ENCODE measurements at regions of chr9 and their contacts with region 1.

Region 1: GRCh38 chr9:35956651-35957050 is 1.3 kb downstream of the OR2S2 start:
- DNase-seq: no peak
- H3K4me3 ChIP-seq: no peak overlapping the region
- H3K27ac ChIP-seq: no peak overlapping the region
- H3K4me1 ChIP-seq: no peaks in the 10 kb centered on the region
- H3K27me3 ChIP-seq: no peaks in the 10 kb centered on the region
- CTCF ChIP-seq: no peak

Region 2: DNA sequence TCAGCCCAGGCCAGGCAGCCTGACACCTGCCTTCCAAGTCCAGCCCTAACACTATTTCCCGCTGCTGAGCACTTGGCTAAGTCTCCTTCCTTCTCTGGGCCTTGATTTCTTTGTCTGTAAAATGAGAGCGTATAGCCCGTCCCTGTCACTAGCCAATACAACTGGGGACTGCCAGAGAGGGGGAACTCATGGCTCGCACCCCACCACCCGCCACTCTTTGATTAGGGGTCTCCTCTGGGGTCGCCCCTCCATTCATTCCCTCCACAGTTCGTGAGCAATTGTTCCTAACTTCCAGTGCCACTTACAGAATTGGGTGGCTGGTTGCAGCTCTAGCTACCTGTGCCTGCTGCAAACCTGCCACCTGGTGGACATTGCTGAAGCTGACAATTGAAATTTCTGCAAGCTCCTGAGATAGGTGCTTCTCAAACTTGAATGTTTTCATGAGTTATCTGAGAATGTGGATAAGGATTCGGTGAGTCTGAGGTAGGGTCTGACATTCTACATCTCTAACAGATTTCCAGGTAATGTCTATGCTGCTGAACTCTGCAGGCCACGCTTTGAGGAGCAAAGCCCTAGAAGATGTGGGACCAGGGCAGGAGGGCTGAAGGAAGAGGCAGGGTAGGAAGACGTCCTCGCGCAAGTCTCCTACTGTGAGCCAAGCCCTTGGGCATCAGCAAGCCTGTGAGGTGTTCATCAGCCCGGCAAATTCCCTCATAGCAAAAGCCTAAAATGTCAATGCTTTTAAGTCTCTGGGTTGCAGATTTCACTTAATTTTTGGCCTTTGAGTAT is 66.8 kb after region 1 on chr9:
- intact Hi-C with region 1: loop called (anchors 2 kb)
- DNase-seq: peak; percentile 81
- H3K4me3 ChIP-seq: no peak overlapping the region
- H3K27ac ChIP-seq: no peak overlapping the region
- H3K4me1 ChIP-seq: no peaks in the 10 kb centered on the region
- H3K27me3 ChIP-seq: no peaks in the 10 kb centered on the region
- CTCF ChIP-seq: peak; percentile 69

Measured in colonic mucosa (tissue), 4 donors.